ENCODE measurements at regions of chr10 and their contacts with region 1.

Region 1: GRCh38 chr10:30980951-30981616 is 50.6 kb downstream of the ZNF438 start:
- DNase-seq: no peak
- ATAC-seq: no peak
- H3K4me3 Mint-ChIP-seq: no peak overlapping the region
- H3K27ac Mint-ChIP-seq: no peak overlapping the region
- H3K4me1 Mint-ChIP-seq: peaks cover 11% of the 10 kb centered on the region
- H3K27me3 Mint-ChIP-seq: no peaks in the 10 kb centered on the region
- CTCF ChIP-seq: no peak

Region 2: DNA sequence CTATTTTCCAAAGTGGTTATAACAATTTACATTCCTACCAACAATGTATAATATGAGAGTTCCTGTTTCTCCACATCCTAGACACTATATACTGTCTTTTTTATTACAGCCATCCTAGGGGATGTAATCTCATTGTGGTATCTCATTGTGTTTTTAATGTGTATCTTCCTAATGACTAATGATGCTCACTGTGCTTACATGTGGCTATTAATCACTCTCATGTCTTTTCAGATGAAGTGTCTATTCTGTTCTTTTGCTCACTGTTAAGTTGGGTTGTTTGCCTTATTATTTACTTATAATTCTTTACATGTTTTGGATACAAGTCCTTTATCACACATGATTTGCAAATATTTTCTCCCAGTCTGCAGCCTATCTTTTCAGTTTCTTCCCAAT is 21.2 kb before region 1 on chr10:
- CTCF ChIA-PET with region 1: no interaction called
- POLR2A ChIA-PET with region 1: no interaction called
- intact Hi-C with region 1: loop called (anchors 2 kb)
- DNase-seq: no peak
- ATAC-seq: peak; percentile 14
- H3K4me3 Mint-ChIP-seq: peak overlapping the region; percentile 50
- H3K27ac Mint-ChIP-seq: no peak overlapping the region
- H3K4me1 Mint-ChIP-seq: peaks cover 27% of the 10 kb centered on the region
- H3K27me3 Mint-ChIP-seq: no peaks in the 10 kb centered on the region
- CTCF ChIP-seq: no peak